ENCODE measurements at regions of chr5 and their contacts with region 1.

Region 1: DNA sequence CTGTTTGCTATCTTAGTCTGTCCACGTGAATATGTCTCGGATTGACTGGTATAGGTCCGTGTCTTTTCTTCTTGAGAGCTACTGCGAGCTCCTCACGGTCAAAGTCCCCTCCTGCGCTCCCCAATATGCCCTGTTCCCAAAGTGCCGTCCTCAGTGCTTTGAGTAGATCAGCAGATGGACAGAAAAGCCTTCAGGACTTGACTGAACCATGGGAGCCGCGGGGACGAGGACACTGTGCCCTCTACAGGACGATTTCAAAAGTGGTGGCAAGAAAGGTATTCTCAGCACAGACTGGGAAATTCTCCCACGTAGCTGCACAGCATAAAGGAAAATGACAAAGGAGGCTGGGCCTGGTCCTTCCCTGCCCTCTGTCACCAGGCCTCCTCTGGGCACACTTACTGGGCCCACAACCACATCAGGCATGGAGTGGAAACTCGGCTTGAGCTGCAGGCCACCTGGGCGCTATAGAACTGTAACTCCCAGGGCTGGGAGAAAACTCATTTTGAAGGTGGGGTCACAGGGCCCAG is 16.6 kb upstream of the MTMR12 start:
- DNase-seq: no peak
- H3K4me3 ChIP-seq: no peak overlapping the region
- H3K27ac ChIP-seq: no peak overlapping the region
- H3K27me3 ChIP-seq: peaks cover 3% of the 10 kb centered on the region
- CTCF ChIP-seq: peak; percentile 77

Region 2: DNA sequence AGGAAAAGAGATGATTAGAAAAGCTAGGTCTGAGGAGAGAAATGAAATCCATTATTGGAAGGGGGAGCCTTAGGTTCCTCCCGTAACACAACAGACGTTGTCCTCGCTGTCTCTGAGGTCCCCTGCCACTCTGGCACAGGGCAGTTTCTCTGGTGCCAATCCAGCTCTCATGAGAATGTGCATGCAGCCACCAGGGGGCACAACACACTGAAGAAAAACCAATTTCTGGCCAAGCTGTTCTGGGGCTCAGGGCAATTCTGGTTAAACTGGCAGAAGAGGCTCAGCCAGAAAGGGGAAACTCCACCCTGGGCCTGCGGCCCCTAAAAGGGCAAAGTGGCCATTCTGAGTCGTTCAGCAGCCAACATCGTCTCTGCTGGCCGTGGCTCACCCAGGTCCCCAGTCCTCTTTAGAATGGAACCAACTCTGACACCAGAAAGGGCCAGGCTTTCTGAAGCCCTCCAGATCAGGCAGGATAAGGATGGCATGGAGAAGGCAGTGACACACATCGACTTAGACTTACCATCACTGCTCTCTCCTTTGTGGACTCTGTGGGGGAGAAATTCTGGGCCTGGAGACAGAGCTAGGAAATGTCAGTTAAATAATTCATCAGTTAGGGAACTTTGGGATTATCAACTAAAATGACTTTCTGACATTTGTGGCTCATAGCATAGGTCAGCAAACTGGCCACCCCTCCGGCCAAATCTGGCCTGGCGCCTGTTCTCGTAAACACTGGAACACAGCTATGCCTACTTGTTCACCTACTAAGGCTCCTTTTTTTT is 96.7 kb before region 1 on chr5:
- CTCF ChIA-PET with region 1: interaction called, 92 read pairs
- POLR2A ChIA-PET with region 1: no interaction called
- DNase-seq: peak; percentile 34
- H3K4me3 ChIP-seq: no peak overlapping the region
- H3K27ac ChIP-seq: no peak overlapping the region
- H3K27me3 ChIP-seq: no peaks in the 10 kb centered on the region
- CTCF ChIP-seq: peak; percentile 80

Region 3: DNA sequence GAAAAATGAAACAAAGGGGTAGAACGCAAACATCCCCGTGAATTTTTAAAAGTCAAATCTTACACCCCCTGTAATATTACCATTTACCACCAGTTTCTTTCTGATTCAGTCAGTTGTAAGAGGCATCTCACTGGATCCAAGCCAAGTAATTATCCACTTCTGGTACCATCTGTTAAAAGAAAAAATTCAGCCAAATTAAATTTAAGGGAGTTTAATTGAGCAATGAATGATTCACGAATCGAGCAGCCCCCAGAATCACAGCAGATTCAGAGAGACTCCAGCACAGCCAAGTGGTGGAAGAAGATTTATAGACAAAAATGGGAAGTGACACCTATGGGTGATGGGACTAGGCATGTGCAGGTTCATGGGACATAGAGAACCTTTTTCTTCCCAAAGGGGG is 13.3 kb after region 1 on chr5:
- CTCF ChIA-PET with region 1: interaction called, 22 read pairs
- POLR2A ChIA-PET with region 1: no interaction called
- DNase-seq: no peak
- H3K4me3 ChIP-seq: no peak overlapping the region
- H3K27ac ChIP-seq: no peak overlapping the region
- H3K27me3 ChIP-seq: no peaks in the 10 kb centered on the region
- CTCF ChIP-seq: no peak

Region 4: GRCh38 chr5:32355686-32356085 is 26.3 kb after region 1 on chr5:
- CTCF ChIA-PET with region 1: no interaction called
- POLR2A ChIA-PET with region 1: interaction called, 11 read pairs
- DNase-seq: no peak
- H3K4me3 ChIP-seq: no peak overlapping the region
- H3K27ac ChIP-seq: no peak overlapping the region
- H3K27me3 ChIP-seq: no peaks in the 10 kb centered on the region
- CTCF ChIP-seq: no peak

Measured in AG04450 (cell line).